Right ventricle myocardium superior (tissue), 1 donor: ENCODE measurements at regions of chr9 and their contacts with region 1.

Region 1: DNA sequence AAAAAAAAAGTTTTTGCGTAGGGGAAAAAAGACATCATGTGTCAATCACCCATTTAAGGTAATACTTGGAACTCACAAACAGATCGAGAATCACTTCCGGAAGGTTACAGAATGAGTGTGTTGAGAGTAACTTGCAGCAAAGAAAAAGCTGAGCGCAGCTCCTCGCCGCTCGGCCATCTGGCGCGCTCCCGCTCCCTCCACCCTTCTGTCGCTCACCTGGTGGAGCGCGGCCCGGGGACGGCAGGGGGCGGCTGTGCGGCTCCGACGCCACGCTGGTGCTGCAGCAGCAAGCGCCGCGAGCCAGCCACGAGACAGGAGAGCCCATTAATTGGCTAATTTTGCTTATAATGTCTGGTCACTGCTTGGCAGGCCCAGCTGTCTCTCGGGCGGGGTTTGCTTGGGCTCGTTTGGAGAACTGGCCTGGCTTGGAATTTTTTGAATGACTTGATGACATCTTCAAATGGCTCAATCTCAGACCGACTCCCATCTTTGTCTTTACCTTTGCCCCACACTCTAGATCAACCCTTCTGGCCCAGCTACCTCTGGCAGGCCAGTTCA is 601.8 kb downstream of the CCDC171 start:
- DNase-seq: peak; percentile 58
- ATAC-seq: peak; percentile 51

Region 2: GRCh38 chr9:16030513-16031185 is 124.0 kb before region 1 on chr9:
- intact Hi-C with region 1: no loop called
- DNase-seq: no peak
- ATAC-seq: no peak

Region 3: DNA sequence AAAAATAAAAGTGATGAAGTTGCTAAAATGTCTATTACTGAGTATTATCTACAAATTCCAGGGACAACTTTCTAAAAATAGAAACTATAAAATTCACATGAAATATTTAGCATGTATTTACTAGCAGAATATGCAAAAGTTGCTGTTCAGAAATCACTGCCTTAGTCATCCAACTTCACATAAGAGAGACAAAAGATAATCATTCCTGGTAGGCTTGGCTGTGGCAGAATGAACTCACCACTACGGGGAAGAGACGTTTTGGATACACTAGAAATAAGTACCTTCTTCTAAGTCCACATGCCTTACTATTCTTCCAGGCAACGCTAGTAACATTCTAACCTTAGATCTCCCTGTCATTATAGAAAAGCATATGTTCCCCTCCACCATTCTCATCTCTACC is 443.7 kb after region 1 on chr9:
- intact Hi-C with region 1: loop called (anchors 10 kb)
- DNase-seq: no peak
- ATAC-seq: no peak